Heart right ventricle (tissue), 16 donors: ENCODE measurements at regions of chr14 and their contacts with region 1.

Region 1: GRCh38 chr14:63276492-63277342 is 42.0 kb downstream of the GPHB5 start:
- DNase-seq: no peak
- ATAC-seq: peak in 2 of 8 donors; percentile 29 to 47
- H3K4me3 ChIP-seq: no peak overlapping the region
- H3K27ac ChIP-seq: peak overlapping the region in 1 of 10 donors; percentile 8
- H3K4me1 ChIP-seq: peaks cover 3 to 34% (median 8%) of the 10 kb centered on the region in 9 donors
- H3K27me3 ChIP-seq: no peaks in the 10 kb centered on the region
- CTCF ChIP-seq: peak; percentile 58 to 86 (median 81)

Region 2: GRCh38 chr14:62162998-62163589 is 1113.6 kb before region 1 on chr14:
- intact Hi-C with region 1: loop called in 4 of 10 experiments (anchors 5 kb)
- DNase-seq: no peak
- ATAC-seq: peak in 3 of 8 donors; percentile 42 to 49 (median 44)
- H3K4me3 ChIP-seq: no peak overlapping the region
- H3K27ac ChIP-seq: no peak overlapping the region
- H3K4me1 ChIP-seq: no peaks in the 10 kb centered on the region
- H3K27me3 ChIP-seq: peaks cover 0 to 47% (median 13%) of the 10 kb centered on the region in 7 donors
- CTCF ChIP-seq: peak; percentile 28 to 75 (median 62)

Region 3: DNA sequence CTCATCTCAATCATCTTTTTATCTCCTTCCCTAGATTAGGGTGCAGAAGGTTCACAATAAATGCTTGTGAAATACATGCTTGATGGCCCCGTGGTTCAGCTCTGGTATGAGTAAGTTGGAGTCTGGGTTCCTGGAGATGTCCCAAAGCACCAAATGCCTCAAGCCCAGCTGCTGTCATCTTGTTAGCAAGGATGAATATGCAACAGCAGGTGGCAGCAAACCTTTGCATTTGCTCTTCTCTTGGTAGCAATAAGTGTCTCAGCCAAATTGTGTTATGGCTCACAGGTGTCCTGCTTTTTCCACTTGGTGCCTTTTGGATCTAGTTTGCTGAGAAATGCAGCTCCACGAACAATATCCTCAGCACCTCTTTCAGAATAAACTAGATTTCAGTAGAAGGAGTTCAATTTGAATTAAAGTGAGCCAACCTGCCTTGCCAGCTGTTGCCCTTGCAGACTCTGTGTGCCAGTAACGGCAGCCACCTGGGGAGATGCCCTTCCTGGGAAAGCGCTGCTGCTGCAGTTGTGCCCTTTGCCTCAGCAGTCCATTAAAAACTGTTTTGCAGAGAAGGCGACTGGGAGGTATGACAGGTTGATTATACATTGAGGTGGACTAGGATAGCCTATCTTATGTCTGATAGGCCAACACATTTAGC is 1097.2 kb before region 1 on chr14:
- intact Hi-C with region 1: loop called in 7 of 10 experiments (anchors 5 kb)
- DNase-seq: peak in 1 of 2 donors; percentile 29
- ATAC-seq: peak in 3 of 8 donors; percentile 28 to 76 (median 57)
- H3K4me3 ChIP-seq: no peak overlapping the region
- H3K27ac ChIP-seq: no peak overlapping the region
- H3K4me1 ChIP-seq: no peaks in the 10 kb centered on the region
- H3K27me3 ChIP-seq: peaks cover 0 to 11% (median 0%) of the 10 kb centered on the region in 7 donors
- CTCF ChIP-seq: peak in 7 of 9 donors; percentile 41 to 60 (median 51)

Region 4: GRCh38 chr14:63174760-63175211 is 101.9 kb before region 1 on chr14:
- intact Hi-C with region 1: loop called (anchors 1 to 5 kb)
- DNase-seq: peak in 1 of 2 donors; percentile 51
- ATAC-seq: peak in 7 of 8 donors; percentile 61 to 83 (median 74)
- H3K4me3 ChIP-seq: no peak overlapping the region
- H3K27ac ChIP-seq: peak overlapping the region in 1 of 10 donors; percentile 2
- H3K4me1 ChIP-seq: peaks cover 0 to 21% (median 14%) of the 10 kb centered on the region in 9 donors
- H3K27me3 ChIP-seq: no peaks in the 10 kb centered on the region
- CTCF ChIP-seq: peak; percentile 57 to 84 (median 70)

Region 5: DNA sequence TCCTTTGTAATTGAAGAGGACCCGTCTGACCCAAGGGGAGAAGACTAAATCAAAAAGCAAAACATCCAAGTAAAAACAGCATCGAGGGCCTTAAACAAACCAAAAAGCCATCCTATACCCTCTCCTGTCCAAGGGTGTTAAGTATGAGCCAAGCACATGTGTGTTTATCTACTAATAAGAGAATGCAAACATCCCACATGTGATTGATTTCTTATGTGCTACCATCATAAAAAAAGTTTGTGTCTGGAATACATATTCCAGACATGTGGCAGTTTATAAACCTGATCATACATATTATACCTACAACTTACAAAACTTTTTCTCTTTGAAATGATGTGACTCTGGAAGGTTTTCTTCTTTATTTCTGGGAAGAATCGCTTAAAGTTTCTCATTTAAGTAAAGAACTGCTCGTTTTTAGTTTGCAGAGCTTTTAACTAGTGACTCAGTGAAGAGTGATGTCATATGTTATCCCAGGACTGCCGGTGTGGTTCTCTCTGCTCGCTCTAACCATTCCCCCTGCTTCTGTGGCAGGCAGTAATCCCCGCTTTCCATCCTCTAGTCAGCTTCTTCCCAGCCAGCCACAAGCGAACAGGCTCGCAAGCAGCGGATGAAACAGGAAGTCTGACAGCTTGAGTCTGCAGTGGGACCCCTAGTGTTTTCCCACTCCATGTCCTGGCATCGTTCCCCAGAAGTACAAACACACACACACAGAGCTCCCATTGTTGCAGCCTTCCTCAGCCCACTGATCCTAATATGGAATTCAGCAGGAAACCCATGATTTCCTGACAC is 72.9 kb before region 1 on chr14:
- intact Hi-C with region 1: loop called in 1 of 10 experiments (anchors 2 kb)
- DNase-seq: peak; percentile 60 to 95
- ATAC-seq: peak; percentile 94 to 97 (median 96)
- H3K4me3 ChIP-seq: peak overlapping the region; percentile 44 to 70 (median 60)
- H3K27ac ChIP-seq: peak overlapping the region; percentile 75 to 98 (median 93)
- H3K4me1 ChIP-seq: peaks cover 0 to 44% (median 14%) of the 10 kb centered on the region in 9 donors
- H3K27me3 ChIP-seq: no peaks in the 10 kb centered on the region
- CTCF ChIP-seq: peak in 6 of 9 donors; percentile 13 to 56 (median 32)

Region 6: DNA sequence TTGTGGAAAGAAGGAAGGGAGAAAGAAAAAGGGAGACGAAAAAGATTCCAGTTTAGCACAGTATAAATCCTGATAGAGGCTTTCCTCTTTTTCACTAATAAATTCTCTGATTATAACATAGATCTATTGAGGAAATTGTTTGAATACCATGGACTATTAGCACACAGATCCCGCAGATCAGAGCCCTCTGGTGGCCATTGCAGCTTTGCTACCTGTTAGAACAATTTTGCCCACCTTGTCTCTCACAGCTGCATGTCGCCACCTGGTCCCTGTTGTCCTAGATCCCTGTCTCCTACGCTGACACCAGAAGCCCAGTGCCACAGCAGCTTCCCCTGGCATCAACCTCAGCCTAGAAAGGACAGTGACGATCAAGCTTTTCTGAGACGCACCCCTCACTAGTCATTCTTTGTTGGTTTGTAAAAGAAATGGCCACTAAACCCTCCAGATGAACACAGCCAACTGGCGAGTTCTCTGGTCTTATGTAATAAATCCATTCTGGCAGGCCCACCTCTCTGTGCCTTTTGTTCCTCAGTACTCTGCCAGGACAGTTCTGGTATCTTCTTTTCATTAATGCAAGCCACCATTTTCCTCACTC is 32.1 kb after region 1 on chr14:
- intact Hi-C with region 1: no loop called
- DNase-seq: no peak
- ATAC-seq: no peak
- H3K4me3 ChIP-seq: no peak overlapping the region
- H3K27ac ChIP-seq: no peak overlapping the region
- H3K4me1 ChIP-seq: no peaks in the 10 kb centered on the region
- H3K27me3 ChIP-seq: no peaks in the 10 kb centered on the region
- CTCF ChIP-seq: peak in 6 of 9 donors; percentile 32 to 50 (median 44)